Left ventricle myocardium inferior (tissue), 1 donor: ENCODE measurements at regions of chr5 and their contacts with region 1.

Region 1: DNA sequence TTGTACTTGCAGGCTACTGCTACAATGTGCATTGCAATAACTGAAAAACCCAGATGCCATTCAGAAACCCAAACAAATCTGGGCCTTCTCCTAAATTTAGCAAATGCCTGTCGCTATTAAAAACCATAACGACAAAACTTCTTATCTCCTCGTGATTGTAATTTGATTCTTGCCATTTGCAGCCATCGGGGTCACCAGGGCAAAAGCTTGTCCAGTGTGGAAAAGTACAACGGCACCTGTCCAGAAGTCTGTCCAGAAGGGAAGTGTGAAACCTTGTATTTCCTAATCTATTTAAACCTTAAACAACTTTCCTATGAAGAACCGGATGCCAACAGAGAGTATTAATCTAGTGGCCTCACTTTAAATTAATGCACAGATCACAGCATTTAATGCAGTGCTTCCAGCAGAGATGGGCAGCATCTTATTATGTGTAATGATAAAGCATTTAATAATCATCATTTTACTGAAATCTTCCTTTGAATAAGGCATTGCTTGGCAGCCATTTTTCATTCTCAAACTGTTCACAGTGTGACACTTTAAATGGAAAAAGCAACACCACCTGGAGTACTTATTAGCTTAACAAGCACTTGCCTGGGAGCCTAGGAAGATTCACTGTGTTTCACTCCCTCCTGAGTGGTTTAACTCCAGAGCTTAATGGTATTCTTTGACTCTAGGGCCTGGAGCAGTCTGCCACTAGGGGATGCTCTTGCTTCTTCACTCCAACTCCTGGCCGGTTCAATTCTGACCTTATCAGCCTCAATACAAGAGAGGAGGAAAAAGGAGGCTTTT is 4.9 kb upstream of the C7 start:
- DNase-seq: peak; percentile 53
- H3K4me3 ChIP-seq: no peak overlapping the region
- H3K27ac ChIP-seq: peak overlapping the region; percentile 76
- H3K4me1 ChIP-seq: peaks cover 22% of the 10 kb centered on the region
- H3K27me3 ChIP-seq: no peaks in the 10 kb centered on the region
- CTCF ChIP-seq: peak; percentile 95

Region 2: GRCh38 chr5:40981420-40981819 is 77.0 kb after region 1 on chr5:
- intact Hi-C with region 1: no loop called
- DNase-seq: no peak
- H3K4me3 ChIP-seq: no peak overlapping the region
- H3K27ac ChIP-seq: no peak overlapping the region
- H3K4me1 ChIP-seq: no peaks in the 10 kb centered on the region
- H3K27me3 ChIP-seq: no peaks in the 10 kb centered on the region
- CTCF ChIP-seq: no peak

Region 3: GRCh38 chr5:41193456-41194205 is 289.2 kb after region 1 on chr5:
- intact Hi-C with region 1: loop called (anchors 10 kb)
- DNase-seq: peak; percentile 99
- H3K4me3 ChIP-seq: no peak overlapping the region
- H3K27ac ChIP-seq: peak overlapping the region; percentile 90
- H3K4me1 ChIP-seq: peaks cover 28% of the 10 kb centered on the region
- H3K27me3 ChIP-seq: no peaks in the 10 kb centered on the region
- CTCF ChIP-seq: no peak

Region 4: GRCh38 chr5:41219658-41220269 is 315.4 kb after region 1 on chr5:
- intact Hi-C with region 1: no loop called
- DNase-seq: no peak
- H3K4me3 ChIP-seq: no peak overlapping the region
- H3K27ac ChIP-seq: peak overlapping the region; percentile 63
- H3K4me1 ChIP-seq: peaks cover 19% of the 10 kb centered on the region
- H3K27me3 ChIP-seq: no peaks in the 10 kb centered on the region
- CTCF ChIP-seq: no peak

Region 5: DNA sequence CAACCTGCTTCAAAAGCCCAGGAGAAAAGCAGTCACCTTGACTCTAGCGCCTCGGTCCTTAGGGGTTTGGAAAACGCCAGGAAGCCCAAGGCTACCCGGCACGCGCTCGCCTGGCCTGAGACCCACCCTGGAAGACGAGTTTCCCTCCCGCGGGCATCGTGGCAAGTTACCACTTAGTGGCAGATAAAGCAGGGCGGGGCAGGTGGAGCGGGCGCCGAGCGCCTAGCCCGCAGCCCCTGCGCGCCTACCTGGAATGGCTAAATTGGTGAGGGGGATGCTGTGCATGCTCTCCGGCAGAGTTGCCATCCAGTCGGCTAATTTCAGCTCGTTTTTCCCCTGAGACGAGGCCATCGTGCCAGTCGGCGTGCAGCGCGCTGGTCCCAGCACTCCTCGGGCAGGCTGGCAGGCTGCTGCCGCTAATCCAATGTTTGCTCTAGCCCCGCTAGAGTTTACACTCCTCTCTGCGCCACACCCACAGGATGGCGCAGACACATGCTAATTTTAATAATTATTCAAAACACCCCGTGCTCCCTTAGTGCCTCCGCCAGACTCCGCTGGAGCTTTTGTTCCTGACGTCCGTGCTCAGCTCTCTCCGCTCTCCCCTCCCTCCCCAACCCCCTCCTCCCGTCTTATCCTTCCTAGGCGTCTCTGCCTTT is 605.9 kb after region 1 on chr5 and contains the start of gene PLCXD3:
- intact Hi-C with region 1: loop called (anchors 10 kb)
- DNase-seq: peak; percentile 58
- H3K4me3 ChIP-seq: peak within 1 kb of the TSS; percentile 81
- H3K27ac ChIP-seq: peak within 1 kb of the TSS; percentile 87
- H3K4me1 ChIP-seq: peaks cover 36% of the 10 kb centered on the region
- H3K27me3 ChIP-seq: peaks cover 10% of the 10 kb centered on the region
- CTCF ChIP-seq: no peak
- total RNA-seq, gene PLCXD3: 73.1 TPM